Activated naive CD8-positive, alpha-beta T cell treated with anti-CD3 and anti-CD28 coated beads, Interleukin-2, amount 10 ng/mL, durations not matched to agents 7 days and 5 days (primary cell): ENCODE measurements at regions of chr10 and their contacts with region 1.

Region 1: GRCh38 chr10:61903221-61903927 is 1.9 kb downstream of the ARID5B start:
- DNase-seq: peak; percentile 83
- ATAC-seq: peak; percentile 62
- H3K4me3 Mint-ChIP-seq: peak overlapping the region; percentile 95
- H3K27ac Mint-ChIP-seq: peak overlapping the region; percentile 93
- H3K4me1 Mint-ChIP-seq: peaks cover 32% of the 10 kb centered on the region
- H3K27me3 Mint-ChIP-seq: no peaks in the 10 kb centered on the region

Region 2: DNA sequence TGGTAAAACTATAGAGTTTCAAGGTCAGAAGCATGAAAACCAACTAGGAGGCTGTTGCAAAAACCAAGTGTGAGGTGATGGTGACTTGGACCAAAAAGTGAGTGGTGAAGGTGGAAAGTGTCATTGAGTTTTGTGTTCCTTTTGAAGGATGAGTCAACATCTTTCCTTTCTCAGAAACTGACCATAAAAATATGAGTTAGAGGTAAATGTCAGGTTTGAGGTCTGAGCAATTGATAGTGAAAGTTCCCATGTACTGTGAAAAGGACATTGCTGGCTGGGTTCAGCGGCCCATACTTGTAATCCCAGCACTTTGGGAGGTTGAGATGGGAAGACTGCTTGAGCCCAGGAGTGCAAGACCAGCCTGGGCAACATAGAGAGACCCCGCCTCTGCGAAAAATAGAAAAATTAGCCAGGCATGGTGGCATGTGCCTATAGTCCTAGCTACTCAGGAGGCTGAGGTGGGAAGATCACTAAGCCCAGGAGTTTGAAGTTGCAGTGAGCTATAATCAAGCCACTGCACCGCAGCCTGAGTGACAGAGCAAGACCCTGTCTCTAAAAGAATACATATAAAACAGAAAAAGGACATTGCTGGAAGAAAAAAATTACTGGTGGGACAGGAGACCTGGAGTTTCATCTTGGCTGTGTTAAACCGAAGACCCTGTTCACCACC is 91.2 kb before region 1 on chr10:
- POLR2A ChIA-PET with region 1: no interaction called
- DNase-seq: no peak
- ATAC-seq: peak; percentile 52
- H3K4me3 Mint-ChIP-seq: peak overlapping the region; percentile 21
- H3K27ac Mint-ChIP-seq: no peak overlapping the region
- H3K4me1 Mint-ChIP-seq: peaks cover 6% of the 10 kb centered on the region
- H3K27me3 Mint-ChIP-seq: no peaks in the 10 kb centered on the region

Region 3: GRCh38 chr10:61987951-61988379 is 84.6 kb after region 1 on chr10:
- POLR2A ChIA-PET with region 1: interaction called, 14 read pairs
- DNase-seq: no peak
- ATAC-seq: peak; percentile 90
- H3K4me3 Mint-ChIP-seq: peak overlapping the region; percentile 79
- H3K27ac Mint-ChIP-seq: peak overlapping the region; percentile 95
- H3K4me1 Mint-ChIP-seq: peaks cover 44% of the 10 kb centered on the region
- H3K27me3 Mint-ChIP-seq: no peaks in the 10 kb centered on the region

Region 4: GRCh38 chr10:62038609-62039190 is 135.3 kb after region 1 on chr10:
- POLR2A ChIA-PET with region 1: interaction called, 21 read pairs
- DNase-seq: peak; percentile 67
- ATAC-seq: peak; percentile 67
- H3K4me3 Mint-ChIP-seq: peak overlapping the region; percentile 36
- H3K27ac Mint-ChIP-seq: peak overlapping the region; percentile 80
- H3K4me1 Mint-ChIP-seq: peaks cover 53% of the 10 kb centered on the region
- H3K27me3 Mint-ChIP-seq: no peaks in the 10 kb centered on the region

Region 5: DNA sequence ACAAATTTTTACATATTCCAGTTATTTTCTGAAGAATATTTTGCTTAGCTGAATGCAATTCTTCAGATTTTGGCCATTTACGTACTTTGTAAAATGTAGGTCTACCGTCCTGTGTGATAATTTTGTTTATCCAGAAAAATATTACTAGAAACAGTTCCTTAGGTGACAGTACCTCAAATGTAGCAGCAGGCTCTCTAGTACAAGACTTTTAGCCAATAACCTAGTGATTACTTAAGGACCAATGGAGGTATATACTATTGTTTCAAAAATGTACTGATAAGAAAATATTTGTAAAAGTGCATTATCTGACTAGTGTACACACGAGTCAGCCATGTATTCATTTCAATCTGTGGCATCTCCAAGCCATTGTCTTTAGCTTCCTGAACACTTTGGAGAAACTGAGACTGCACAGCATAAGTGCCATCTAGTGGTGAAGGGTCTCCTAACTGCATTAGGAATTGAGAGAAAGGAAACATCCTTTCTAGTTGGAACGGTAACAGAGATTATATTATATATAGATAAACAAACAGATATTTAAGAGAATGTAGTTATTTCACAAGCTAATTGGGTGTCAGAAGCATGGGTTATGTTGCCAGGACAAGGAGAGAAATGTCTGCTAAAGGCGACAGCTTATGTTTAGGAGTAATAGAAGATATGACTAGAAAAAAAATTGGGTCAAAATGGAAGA is 341.6 kb after region 1 on chr10:
- POLR2A ChIA-PET with region 1: interaction called, 16 read pairs
- DNase-seq: no peak
- ATAC-seq: peak; percentile 87
- H3K4me3 Mint-ChIP-seq: peak overlapping the region; percentile 59
- H3K27ac Mint-ChIP-seq: peak overlapping the region; percentile 65
- H3K4me1 Mint-ChIP-seq: peaks cover 31% of the 10 kb centered on the region
- H3K27me3 Mint-ChIP-seq: no peaks in the 10 kb centered on the region